Caco-2 (cell line): ENCODE measurements at regions of chr16 and their contacts with region 1.

Region 1: DNA sequence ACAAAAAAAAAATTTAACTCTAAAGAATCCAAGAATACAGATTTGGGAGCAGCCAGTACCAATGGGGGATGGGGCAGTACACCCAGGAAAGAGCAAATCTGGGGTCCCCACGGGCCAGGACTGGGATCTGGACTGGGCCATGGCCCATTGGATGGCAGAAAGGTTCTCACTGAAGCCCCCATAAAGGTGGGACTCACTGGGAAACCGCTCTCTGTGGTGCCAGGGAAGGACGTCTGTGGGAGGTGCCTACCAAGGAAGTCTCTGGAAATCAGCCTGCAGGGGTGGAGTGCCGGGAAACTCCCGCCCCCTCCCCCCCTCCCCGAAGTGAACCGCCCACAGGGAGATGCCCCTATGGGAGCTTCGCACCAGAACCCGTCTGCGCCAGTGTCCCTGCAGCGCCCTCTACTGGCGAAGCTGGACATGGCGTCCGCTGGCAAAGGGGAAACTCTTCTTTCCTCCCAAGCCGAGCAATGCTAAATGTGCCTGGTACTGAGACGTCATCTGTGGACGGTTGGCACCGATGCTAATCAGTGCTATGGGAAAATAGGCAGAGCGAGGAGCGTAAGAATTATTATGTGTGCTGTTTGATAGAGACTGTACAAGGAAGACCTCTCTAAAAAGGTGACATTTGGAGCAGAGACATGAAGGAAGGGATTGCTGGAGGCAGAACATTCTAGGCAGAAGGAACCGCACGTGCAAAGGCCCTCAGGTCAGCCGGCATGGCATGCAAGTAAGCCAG is 671.1 kb downstream of the WWOX start:
- DNase-seq: peak; percentile 61 to 71
- H3K4me3 ChIP-seq: no peak overlapping the region
- H3K4me3 Mint-ChIP-seq: no peak overlapping the region
- H3K27ac Mint-ChIP-seq: no peak overlapping the region
- H3K4me1 ChIP-seq: no peaks in the 10 kb centered on the region
- H3K4me1 Mint-ChIP-seq: no peaks in the 10 kb centered on the region
- H3K27me3 ChIP-seq: no peaks in the 10 kb centered on the region
- H3K27me3 Mint-ChIP-seq: no peaks in the 10 kb centered on the region
- CTCF ChIP-seq: peak; percentile 59 to 69

Region 2: DNA sequence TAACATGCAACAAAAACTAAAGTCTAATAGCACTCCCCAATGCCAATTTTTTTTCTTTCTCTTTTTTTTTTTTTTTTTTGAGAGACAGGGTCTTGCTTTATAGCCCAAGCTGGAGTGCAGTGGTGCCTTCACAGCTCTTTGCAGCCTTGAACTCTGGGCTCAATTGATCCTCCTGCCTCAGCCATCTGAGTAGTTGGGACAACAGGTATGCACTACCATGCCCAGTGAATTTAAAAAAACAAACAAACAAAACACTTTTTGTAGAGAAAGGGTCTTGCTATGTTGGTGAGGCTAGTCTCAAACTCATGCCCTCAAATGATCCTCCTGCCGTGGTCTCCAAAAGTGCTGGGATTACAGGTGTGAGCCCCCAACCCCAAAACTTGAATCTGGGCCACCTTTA is 38.7 kb before region 1 on chr16:
- CTCF ChIA-PET with region 1: no interaction called
- POLR2A ChIA-PET with region 1: no interaction called
- intact Hi-C with region 1: loop called (anchors 1 kb)
- DNase-seq: no peak
- H3K4me3 ChIP-seq: no peak overlapping the region
- H3K4me3 Mint-ChIP-seq: no peak overlapping the region
- H3K27ac Mint-ChIP-seq: no peak overlapping the region
- H3K4me1 ChIP-seq: peaks cover 9% of the 10 kb centered on the region
- H3K4me1 Mint-ChIP-seq: peaks cover 21% of the 10 kb centered on the region
- H3K27me3 ChIP-seq: no peaks in the 10 kb centered on the region
- H3K27me3 Mint-ChIP-seq: no peaks in the 10 kb centered on the region
- CTCF ChIP-seq: no peak

Region 3: DNA sequence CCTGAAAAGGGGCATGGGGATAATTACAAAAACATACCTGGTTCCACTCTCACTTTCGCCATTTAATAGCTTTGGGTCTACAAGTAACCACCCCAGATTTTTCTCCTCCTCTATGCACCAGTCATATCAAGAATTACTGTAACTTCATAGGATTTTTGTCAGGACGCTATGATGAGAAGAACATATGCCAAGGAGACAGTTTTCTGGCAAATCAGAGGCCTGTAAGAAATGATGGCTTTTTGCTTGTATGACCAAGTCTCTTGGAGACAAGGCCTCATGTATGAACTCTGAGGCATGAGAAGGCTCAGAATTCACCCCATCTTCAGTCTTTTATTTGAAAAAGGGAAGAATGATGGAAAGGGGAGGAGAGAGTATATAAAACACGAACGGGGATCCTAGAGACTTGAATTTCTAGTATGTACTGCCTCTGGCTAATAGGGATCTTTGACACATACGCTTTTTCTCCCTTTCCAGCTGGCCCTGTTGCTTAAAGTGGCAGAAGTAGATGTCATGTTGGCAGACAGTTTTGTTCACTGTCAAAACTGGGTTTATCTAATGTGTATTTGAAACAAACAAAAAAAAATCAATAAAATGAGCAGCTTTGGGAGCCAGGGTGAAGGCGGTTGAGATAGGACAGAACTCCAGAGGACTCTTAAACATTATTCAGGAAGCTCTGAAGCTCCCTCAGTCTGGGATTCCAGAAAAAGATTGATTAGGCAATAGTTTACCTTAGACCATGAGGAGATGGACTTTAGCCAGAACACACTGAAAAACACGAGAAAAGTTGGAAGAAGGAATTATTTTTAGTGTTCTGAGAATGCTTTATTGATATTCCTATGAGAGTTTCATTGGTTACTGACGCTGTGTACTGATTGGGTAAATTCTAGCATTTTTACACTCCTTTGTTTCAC is 14.5 kb before region 1 on chr16:
- CTCF ChIA-PET with region 1: no interaction called
- POLR2A ChIA-PET with region 1: no interaction called
- intact Hi-C with region 1: no loop called
- DNase-seq: no peak
- H3K4me3 ChIP-seq: no peak overlapping the region
- H3K4me3 Mint-ChIP-seq: no peak overlapping the region
- H3K27ac Mint-ChIP-seq: peak overlapping the region; percentile 15
- H3K4me1 ChIP-seq: peaks cover 13% of the 10 kb centered on the region
- H3K4me1 Mint-ChIP-seq: peaks cover 10% of the 10 kb centered on the region
- H3K27me3 ChIP-seq: no peaks in the 10 kb centered on the region
- H3K27me3 Mint-ChIP-seq: no peaks in the 10 kb centered on the region
- CTCF ChIP-seq: no peak

Region 4: GRCh38 chr16:78902321-78902720 is 131.8 kb after region 1 on chr16:
- CTCF ChIA-PET with region 1: no interaction called
- POLR2A ChIA-PET with region 1: no interaction called
- intact Hi-C with region 1: no loop called
- DNase-seq: no peak
- H3K4me3 ChIP-seq: no peak overlapping the region
- H3K4me3 Mint-ChIP-seq: no peak overlapping the region
- H3K27ac Mint-ChIP-seq: no peak overlapping the region
- H3K4me1 ChIP-seq: no peaks in the 10 kb centered on the region
- H3K4me1 Mint-ChIP-seq: no peaks in the 10 kb centered on the region
- H3K27me3 ChIP-seq: no peaks in the 10 kb centered on the region
- H3K27me3 Mint-ChIP-seq: peaks cover 3% of the 10 kb centered on the region
- CTCF ChIP-seq: no peak